PC-9 (cell line): ENCODE measurements at regions of chr17 and their contacts with region 1.

Region 1: DNA sequence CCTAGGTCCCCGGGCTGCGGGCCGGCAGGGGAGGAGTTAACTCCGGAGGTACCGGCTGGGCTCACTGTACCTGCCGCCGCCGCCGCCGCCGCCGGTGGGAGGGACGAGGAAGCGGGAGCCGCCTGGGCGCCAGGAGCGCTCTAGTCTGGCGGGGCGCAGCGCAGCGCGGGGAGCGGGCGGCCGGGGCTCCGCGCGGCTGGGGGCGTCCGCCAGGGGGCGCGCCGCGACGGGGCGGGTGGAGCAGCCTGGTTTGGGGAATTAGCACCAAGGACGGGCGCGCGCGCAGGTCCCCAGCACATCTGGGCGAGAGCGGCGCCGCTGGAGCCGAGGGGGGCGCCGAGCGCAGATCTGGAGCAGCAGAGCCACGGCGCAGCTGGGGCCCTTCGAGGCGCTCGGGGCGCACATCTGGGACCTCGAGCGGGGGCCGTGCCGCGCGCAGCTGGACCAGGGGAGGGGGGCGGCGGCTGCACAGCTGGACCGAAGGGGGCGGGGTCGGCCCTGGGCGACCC is at the start of gene NXPH3:
- DNase-seq: peak in 1 of 2 experiments; percentile 81
- H3K4me3 ChIP-seq: peak within 1 kb of the TSS; percentile 51
- H3K27ac ChIP-seq: no peak within 1 kb of the TSS
- H3K4me1 ChIP-seq: peaks cover 7% of the 10 kb centered on the region; the same call in 1 of the 2 replicates
- H3K27me3 ChIP-seq: peaks cover 81% of the 10 kb centered on the region
- CTCF ChIP-seq: peak; percentile 45; the same call in 1 of the 2 replicates
- total RNA-seq, gene NXPH3: not detected in 2 replicates

Region 2: GRCh38 chr17:49523706-49524472 is 51.7 kb before region 1 on chr17:
- CTCF ChIA-PET with region 1: no interaction called
- POLR2A ChIA-PET with region 1: no interaction called
- intact Hi-C with region 1: no loop called
- DNase-seq: peak; percentile 44 to 85
- H3K4me3 ChIP-seq: no peak overlapping the region
- H3K27ac ChIP-seq: no peak overlapping the region
- H3K4me1 ChIP-seq: no peaks in the 10 kb centered on the region
- H3K27me3 ChIP-seq: peaks cover under 1% of the 10 kb centered on the region; the same call in 1 of the 2 replicates
- CTCF ChIP-seq: no peak

Region 3: DNA sequence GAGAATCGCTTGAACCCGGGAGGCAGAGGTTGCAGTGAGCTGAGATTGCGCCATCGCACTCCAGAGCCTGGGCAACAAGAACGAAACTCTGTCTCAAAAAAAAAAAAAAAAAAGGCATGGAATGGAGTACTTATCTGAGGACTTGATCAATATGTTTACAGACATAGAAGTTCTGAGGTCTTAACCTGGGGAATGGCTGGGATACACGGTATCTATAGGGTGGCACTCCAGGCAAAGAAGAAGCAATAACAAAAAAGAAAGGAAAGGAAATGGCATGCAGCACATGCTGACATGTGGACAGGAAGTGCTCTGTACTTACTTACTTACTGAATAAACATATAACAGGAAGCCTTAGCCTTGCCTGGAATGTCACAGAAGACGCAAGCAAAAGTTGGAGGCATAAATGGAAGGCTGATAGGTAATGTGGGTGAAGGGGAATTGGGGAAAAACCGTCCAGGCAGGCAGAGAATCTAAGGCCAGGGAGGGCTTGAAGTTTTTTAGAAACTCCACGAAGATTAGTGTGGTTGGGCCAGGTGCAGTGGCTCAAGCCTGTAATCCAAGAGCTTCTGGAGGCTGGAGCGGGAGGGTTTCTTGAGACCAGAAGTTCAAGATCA is 112.4 kb after region 1 on chr17:
- CTCF ChIA-PET with region 1: no interaction called
- POLR2A ChIA-PET with region 1: no interaction called
- intact Hi-C with region 1: no loop called
- DNase-seq: no peak
- H3K4me3 ChIP-seq: no peak overlapping the region
- H3K27ac ChIP-seq: no peak overlapping the region
- H3K4me1 ChIP-seq: no peaks in the 10 kb centered on the region
- H3K27me3 ChIP-seq: peaks cover 16% of the 10 kb centered on the region; the same call in 1 of the 2 replicates
- CTCF ChIP-seq: no peak

Region 4: GRCh38 chr17:49788478-49789242 is 213.0 kb after region 1 on chr17 and contains the start of gene KAT7:
- CTCF ChIA-PET with region 1: interaction called, 3 read pairs
- POLR2A ChIA-PET with region 1: no interaction called
- intact Hi-C with region 1: loop called (anchors 10 kb)
- DNase-seq: peak; percentile 98 to 99
- H3K4me3 ChIP-seq: peak within 1 kb of the TSS; percentile 88
- H3K27ac ChIP-seq: peak within 1 kb of the TSS; percentile 91
- H3K4me1 ChIP-seq: peaks cover 24% of the 10 kb centered on the region
- H3K27me3 ChIP-seq: no peaks in the 10 kb centered on the region
- CTCF ChIP-seq: 0 out of 2 replicates have a peak, but pooled peaks have one; percentile 19
- total RNA-seq, gene KAT7: 41.6 and 57.0 TPM in 2 replicates

Region 5: GRCh38 chr17:50087246-50087911 is 511.7 kb after region 1 on chr17:
- CTCF ChIA-PET with region 1: no interaction called
- POLR2A ChIA-PET with region 1: interaction called, 5 read pairs
- intact Hi-C with region 1: loop called (anchors 10 kb)
- DNase-seq: peak; percentile 68 to 72
- H3K4me3 ChIP-seq: no peak overlapping the region
- H3K27ac ChIP-seq: no peak overlapping the region
- H3K4me1 ChIP-seq: no peaks in the 10 kb centered on the region
- H3K27me3 ChIP-seq: no peaks in the 10 kb centered on the region
- CTCF ChIP-seq: peak; percentile 97